IMR-90 (cell line): ENCODE measurements at regions of chr2 and their contacts with region 1.

Region 1: DNA sequence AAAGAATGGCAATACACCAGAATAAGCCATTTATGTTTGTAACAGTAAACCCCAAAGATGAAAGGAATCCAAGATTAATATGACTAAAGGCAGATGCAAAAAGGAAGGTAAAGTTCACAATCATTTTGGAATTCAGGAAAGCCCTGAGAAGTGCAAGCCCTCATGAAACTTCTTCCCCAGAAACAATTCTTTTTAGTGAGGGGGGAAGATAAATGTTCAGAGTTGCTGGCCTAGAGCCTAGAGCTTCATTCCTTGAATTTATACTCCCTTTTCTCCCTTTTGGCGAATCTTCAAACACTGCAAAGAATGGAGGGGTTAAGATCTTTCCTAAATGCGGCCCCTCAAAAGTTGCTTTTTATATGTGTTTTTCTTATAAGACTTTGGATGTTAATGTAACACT is 368.8 kb downstream of the MEIS1 start:
- DNase-seq: peak; percentile 86
- ATAC-seq: peak; percentile 70
- H3K4me3 ChIP-seq: no peak overlapping the region
- H3K27ac ChIP-seq: no peak overlapping the region
- H3K4me1 ChIP-seq: peaks cover 5% of the 10 kb centered on the region
- H3K27me3 ChIP-seq: no peaks in the 10 kb centered on the region
- CTCF ChIP-seq: no peak
- POLR2A ChIP-seq: no peak
- RAD21 ChIP-seq: no peak

Region 2: GRCh38 chr2:66872081-66872985 is 68.6 kb after region 1 on chr2:
- CTCF ChIA-PET with region 1: no interaction called
- POLR2A ChIA-PET with region 1: no interaction called
- dilution Hi-C with region 1: no loop called
- in situ Hi-C with region 1: no loop called
- intact Hi-C with region 1: loop called (anchors 5 kb)
- DNase-seq: peak; percentile 90
- ATAC-seq: peak; percentile 41
- H3K4me3 ChIP-seq: no peak overlapping the region
- H3K27ac ChIP-seq: peak overlapping the region; percentile 94
- H3K4me1 ChIP-seq: peaks cover 33% of the 10 kb centered on the region
- H3K27me3 ChIP-seq: no peaks in the 10 kb centered on the region
- CTCF ChIP-seq: no peak
- POLR2A ChIP-seq: peak; percentile 38; the same call in 1 of the 2 replicates
- RAD21 ChIP-seq: no peak